Activated CD4-positive, alpha-beta memory T cell treated with anti-CD3 and anti-CD28 coated beads for 36 hours (primary cell): ENCODE measurements at regions of chr20 and their contacts with region 1.

Region 1: DNA sequence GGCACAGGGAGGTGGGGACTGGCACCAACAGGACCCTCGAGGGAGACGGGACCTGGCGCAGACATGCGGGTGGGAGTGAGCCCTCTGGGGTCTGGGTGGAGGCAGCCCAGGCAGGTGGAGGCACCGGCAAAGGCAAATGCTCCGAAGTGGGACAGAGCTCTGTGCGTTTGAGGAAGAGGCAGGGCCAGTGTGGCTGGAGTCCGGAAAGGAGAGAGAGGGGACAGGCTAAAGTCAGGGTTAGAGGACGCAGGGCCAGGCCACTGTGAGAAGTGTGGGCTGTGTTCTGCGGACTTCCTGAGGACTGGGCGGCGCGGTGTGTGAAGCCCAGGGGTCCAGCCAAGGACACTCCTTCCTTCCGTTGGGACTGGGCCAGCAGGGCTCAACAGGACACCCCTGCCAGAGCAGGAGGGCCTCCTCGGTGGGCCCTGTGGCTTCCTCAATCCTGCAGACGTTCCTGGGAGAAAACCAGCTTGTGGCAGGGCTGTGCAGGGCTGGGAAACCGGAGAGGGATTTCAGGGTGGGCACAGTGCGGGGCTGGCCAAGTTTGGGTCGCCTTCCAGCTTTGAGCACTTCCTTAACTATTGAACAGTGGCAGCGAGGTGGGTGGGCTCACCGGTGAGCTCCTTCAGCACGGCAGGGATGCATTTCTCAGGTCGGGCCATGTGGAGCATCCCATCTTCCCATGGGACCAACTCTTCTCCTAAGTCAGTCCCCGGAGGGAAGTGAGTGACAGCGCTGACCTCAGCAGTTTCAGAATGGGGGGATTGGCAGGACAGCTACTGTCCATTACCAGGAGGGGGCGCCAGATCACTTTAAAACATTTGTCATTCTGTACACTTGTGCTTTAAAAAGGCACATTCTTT is 22.5 kb downstream of the MOCS3 start:
- DNase-seq: peak; percentile 72
- H3K4me3 Mint-ChIP-seq: no peak overlapping the region
- H3K27ac Mint-ChIP-seq: peak overlapping the region; percentile 28
- H3K4me1 Mint-ChIP-seq: peaks cover 18% of the 10 kb centered on the region
- H3K27me3 Mint-ChIP-seq: peaks cover 42% of the 10 kb centered on the region

Region 2: GRCh38 chr20:50758469-50758868 is 222.6 kb before region 1 on chr20:
- CTCF ChIA-PET with region 1: no interaction called
- POLR2A ChIA-PET with region 1: no interaction called
- intact Hi-C with region 1: no loop called
- DNase-seq: no peak
- H3K4me3 Mint-ChIP-seq: no peak overlapping the region
- H3K27ac Mint-ChIP-seq: no peak overlapping the region
- H3K4me1 Mint-ChIP-seq: no peaks in the 10 kb centered on the region
- H3K27me3 Mint-ChIP-seq: no peaks in the 10 kb centered on the region

Region 3: GRCh38 chr20:50992733-50993457 is 11.8 kb after region 1 on chr20:
- CTCF ChIA-PET with region 1: interaction called, 62 read pairs
- POLR2A ChIA-PET with region 1: no interaction called
- intact Hi-C with region 1: no loop called
- DNase-seq: peak; percentile 68
- H3K4me3 Mint-ChIP-seq: no peak overlapping the region
- H3K27ac Mint-ChIP-seq: no peak overlapping the region
- H3K4me1 Mint-ChIP-seq: no peaks in the 10 kb centered on the region
- H3K27me3 Mint-ChIP-seq: no peaks in the 10 kb centered on the region

Region 4: DNA sequence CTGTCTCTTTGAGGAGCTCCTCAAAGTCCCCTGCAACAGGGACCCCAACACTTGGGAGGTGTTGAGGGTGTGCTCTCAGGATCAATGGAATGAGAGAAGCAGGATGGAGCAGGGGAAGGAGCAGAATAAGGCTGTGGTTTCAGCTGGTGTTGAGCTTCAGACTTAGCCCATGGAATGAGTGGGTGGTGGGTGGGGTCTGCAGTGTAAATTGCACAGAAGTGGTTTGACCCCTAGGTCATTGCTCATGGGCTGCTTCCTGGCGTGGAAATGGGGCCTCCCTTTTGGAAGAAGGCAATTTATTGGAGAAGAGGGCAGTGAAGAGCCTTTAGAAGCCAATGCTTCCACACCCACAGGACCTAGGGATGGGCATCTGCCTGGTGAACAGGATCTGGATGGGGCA is 78.8 kb after region 1 on chr20:
- CTCF ChIA-PET with region 1: no interaction called
- POLR2A ChIA-PET with region 1: no interaction called
- intact Hi-C with region 1: loop called (anchors 1 kb)
- DNase-seq: peak; percentile 17
- H3K4me3 Mint-ChIP-seq: no peak overlapping the region
- H3K27ac Mint-ChIP-seq: no peak overlapping the region
- H3K4me1 Mint-ChIP-seq: peaks cover 48% of the 10 kb centered on the region
- H3K27me3 Mint-ChIP-seq: peaks cover 27% of the 10 kb centered on the region

Region 5: GRCh38 chr20:51318058-51318895 is 337.2 kb after region 1 on chr20:
- CTCF ChIA-PET with region 1: interaction called, 7 read pairs
- POLR2A ChIA-PET with region 1: no interaction called
- intact Hi-C with region 1: loop called (anchors 5 kb)
- DNase-seq: peak; percentile 76
- H3K4me3 Mint-ChIP-seq: no peak overlapping the region
- H3K27ac Mint-ChIP-seq: no peak overlapping the region
- H3K4me1 Mint-ChIP-seq: peaks cover 2% of the 10 kb centered on the region
- H3K27me3 Mint-ChIP-seq: no peaks in the 10 kb centered on the region

Region 6: DNA sequence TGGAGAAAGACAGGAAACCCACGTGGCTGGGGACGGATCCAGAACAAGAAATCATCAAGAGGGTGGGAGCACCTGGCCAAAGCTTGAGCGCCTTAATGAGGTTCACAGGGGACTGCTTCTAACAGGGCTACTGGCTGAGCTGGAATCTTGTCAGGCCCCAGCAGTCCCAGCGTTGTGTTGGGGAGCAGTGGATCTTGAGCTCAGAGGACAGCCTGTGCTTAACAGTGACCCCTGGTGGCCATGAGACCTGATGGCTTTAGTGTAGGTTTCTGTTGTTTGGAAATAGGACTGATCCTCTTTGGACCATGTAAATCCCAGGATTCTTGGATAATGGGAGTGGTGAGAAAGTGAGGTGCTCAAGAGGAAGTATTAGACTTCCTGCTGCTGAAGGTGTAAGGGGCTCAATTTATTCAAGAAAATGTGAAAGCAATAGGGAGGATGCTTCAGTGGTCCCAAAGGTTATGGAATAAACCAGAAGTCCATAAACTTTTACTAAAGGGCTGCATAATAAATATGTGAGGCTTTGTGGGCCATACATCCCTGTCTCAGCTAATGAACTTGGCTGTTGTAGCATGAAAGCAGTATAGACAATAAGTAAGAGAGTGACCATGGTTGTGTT is 345.2 kb after region 1 on chr20:
- CTCF ChIA-PET with region 1: interaction called, 30 read pairs
- POLR2A ChIA-PET with region 1: no interaction called
- intact Hi-C with region 1: loop called (anchors 5 kb)
- DNase-seq: peak; percentile 51
- H3K4me3 Mint-ChIP-seq: no peak overlapping the region
- H3K27ac Mint-ChIP-seq: no peak overlapping the region
- H3K4me1 Mint-ChIP-seq: no peaks in the 10 kb centered on the region
- H3K27me3 Mint-ChIP-seq: peaks cover 2% of the 10 kb centered on the region

Region 7: DNA sequence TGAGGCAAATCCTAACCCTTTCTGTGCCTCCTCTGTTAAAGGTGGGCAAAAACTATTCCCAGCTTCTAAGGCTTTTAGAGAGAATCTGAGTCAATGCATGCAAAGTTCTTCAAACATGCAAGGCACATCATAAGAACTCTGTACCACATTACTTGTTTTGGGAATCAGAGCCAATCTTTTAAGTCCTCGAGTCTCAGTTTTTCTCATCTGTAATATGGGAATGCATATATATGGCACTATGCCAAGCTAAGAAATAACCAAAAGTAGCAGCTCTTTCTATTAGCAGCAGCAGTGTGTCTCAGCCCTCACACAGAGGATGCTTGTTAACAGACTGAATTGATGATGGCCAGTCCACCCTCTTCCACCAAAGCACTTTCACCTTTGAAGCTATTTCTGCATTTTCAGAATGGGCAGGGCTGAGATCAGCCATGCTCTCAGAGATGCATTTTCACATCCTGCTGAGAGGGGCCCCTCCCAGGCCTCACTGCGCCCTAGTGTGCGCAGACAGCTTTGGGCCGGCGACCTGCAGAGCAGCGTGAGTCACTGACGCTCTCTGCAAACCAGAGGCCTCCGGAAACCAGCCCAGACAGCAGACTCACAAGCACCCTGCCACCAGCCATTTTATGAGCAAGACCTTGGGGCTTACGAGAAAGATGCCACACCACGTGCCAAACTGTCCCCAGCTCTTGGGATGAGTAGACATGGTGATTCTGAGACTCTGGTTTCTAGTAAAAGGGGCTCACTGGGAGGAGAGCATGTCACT is 423.4 kb after region 1 on chr20:
- CTCF ChIA-PET with region 1: no interaction called
- POLR2A ChIA-PET with region 1: interaction called, 3 read pairs
- intact Hi-C with region 1: loop called (anchors 2 kb)
- DNase-seq: peak; percentile 97
- H3K4me3 Mint-ChIP-seq: peak overlapping the region; percentile 17
- H3K27ac Mint-ChIP-seq: peak overlapping the region; percentile 99
- H3K4me1 Mint-ChIP-seq: peaks cover 93% of the 10 kb centered on the region
- H3K27me3 Mint-ChIP-seq: no peaks in the 10 kb centered on the region